ENCODE measurements at regions of chr7 and their contacts with region 1.

Region 1: GRCh38 chr7:127651556-127652332 is at the start of gene SND1:
- DNase-seq: peak; percentile 99 to 100
- H3K4me3 ChIP-seq: peak within 1 kb of the TSS; percentile 73 to 89
- H3K27ac ChIP-seq: peak within 1 kb of the TSS; percentile 93 to 96
- H3K4me1 ChIP-seq: peaks cover 0 to 24% of the 10 kb centered on the region in 2 donors
- H3K27me3 ChIP-seq: no peaks in the 10 kb centered on the region
- CTCF ChIP-seq: no peak
- total RNA-seq, gene SND1: 93.8 TPM

Region 2: GRCh38 chr7:127091620-127092019 is 560.1 kb before region 1 on chr7:
- intact Hi-C with region 1: no loop called
- DNase-seq: no peak
- H3K4me3 ChIP-seq: no peak overlapping the region
- H3K27ac ChIP-seq: no peak overlapping the region
- H3K4me1 ChIP-seq: no peaks in the 10 kb centered on the region
- H3K27me3 ChIP-seq: no peaks in the 10 kb centered on the region
- CTCF ChIP-seq: no peak

Region 3: DNA sequence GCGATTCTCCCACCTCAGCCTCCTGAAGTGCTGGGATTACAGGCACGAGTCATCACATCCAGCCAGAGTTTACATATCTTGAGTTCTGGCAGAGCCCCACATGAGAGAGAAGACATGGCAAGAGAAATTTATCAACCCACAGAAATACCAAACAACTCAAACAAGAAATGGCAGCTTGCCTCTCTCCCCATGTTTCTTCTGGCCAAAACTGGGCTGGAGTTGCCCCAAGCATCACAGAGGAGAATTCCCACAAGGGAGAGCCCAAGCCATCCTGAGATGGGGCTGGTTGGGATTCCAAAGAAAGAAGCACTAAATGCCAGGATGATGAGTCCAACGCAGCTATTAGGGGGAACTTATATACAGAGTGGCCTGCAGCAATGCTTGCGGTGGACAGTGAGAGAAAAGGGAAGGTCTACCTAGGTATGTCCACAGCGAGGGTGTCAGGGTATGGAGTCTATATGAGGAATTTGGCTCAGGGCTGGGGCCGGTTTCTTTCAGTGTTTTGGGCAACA is 19.4 kb before region 1 on chr7:
- intact Hi-C with region 1: loop called (anchors 2 kb)
- DNase-seq: no peak
- H3K4me3 ChIP-seq: no peak overlapping the region
- H3K27ac ChIP-seq: peak overlapping the region in 1 of 2 donors; percentile 34
- H3K4me1 ChIP-seq: peaks cover 0 to 10% of the 10 kb centered on the region in 2 donors
- H3K27me3 ChIP-seq: no peaks in the 10 kb centered on the region
- CTCF ChIP-seq: no peak

Measured in ascending aorta (tissue), 2 donors.